ENCODE measurements at regions of chr9 and their contacts with region 1.

Region 1: DNA sequence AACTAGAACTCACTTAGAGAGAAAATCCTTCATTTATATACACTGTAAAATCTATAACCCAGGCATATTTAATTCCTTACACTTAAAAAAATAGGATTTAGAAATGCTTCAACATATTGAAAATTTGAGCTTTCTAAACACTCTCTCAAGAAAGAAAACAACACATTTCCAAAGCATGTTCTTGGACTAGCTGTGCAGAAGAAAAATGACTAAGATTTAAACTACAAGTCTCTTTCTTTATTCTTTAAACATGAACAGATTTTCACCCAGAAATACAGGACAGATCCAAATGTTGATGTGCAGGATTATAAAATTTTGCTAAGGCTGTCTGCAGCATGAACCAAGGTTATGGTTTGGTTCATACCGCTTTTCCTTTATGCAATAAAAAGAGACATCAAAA is 77.7 kb upstream of the TUSC1 start:
- DNase-seq: no peak
- H3K4me3 ChIP-seq: no peak overlapping the region
- H3K27ac ChIP-seq: no peak overlapping the region
- H3K27me3 ChIP-seq: no peaks in the 10 kb centered on the region
- CTCF ChIP-seq: no peak

Region 2: GRCh38 chr9:25827626-25828025 is 71.7 kb after region 1 on chr9:
- intact Hi-C with region 1: loop called in 1 of 2 experiments (anchors 10 kb)
- DNase-seq: no peak
- H3K4me3 ChIP-seq: no peak overlapping the region
- H3K27ac ChIP-seq: no peak overlapping the region
- H3K27me3 ChIP-seq: no peaks in the 10 kb centered on the region
- CTCF ChIP-seq: no peak

Measured in dorsolateral prefrontal cortex (tissue), 120 donors.